ENCODE measurements at regions of chr14 and their contacts with region 1.

Region 1: DNA sequence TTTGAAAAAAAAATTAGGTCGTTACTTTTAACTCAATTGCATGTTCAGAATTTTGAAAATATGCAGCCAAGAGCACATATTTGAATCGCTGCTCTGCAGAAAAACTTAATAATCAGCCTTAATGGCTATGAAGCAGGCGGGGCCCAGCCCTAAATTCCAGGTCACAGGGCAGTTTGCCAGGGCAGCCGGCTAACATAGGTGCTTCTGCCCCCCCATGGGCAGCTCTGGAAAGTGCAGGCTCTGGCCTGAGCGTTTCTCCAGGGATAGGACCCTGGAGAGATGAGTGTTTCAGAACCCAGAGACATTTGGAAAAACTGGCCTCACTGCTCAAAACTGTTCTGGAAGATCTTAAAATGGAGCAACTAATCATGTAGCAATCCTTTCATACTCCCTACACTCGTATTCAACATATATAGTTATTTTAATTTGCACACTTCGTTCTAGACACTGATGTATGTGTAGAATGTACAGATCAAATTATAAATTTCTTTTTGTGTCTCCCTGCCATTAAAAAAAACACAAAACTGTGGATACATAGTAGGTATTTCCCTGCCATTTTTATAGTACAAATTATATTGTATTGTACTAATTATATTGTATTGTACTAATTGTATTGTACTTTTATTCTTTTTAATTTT is 26.0 kb upstream of the PTGR2 start:
- DNase-seq: peak; percentile 68 to 86
- H3K4me3 ChIP-seq: no peak overlapping the region
- H3K27ac ChIP-seq: no peak overlapping the region
- H3K4me1 ChIP-seq: peaks cover 33% of the 10 kb centered on the region
- H3K27me3 ChIP-seq: no peaks in the 10 kb centered on the region
- CTCF ChIP-seq: peak; percentile 85

Region 2: GRCh38 chr14:73753959-73754882 is 71.4 kb before region 1 on chr14:
- CTCF ChIA-PET with region 1: no interaction called
- POLR2A ChIA-PET with region 1: no interaction called
- intact Hi-C with region 1: loop called (anchors 1 kb)
- DNase-seq: no peak
- H3K4me3 ChIP-seq: no peak overlapping the region
- H3K27ac ChIP-seq: peak overlapping the region; percentile 90
- H3K4me1 ChIP-seq: peaks cover 79% of the 10 kb centered on the region
- H3K27me3 ChIP-seq: no peaks in the 10 kb centered on the region
- CTCF ChIP-seq: no peak

Region 3: DNA sequence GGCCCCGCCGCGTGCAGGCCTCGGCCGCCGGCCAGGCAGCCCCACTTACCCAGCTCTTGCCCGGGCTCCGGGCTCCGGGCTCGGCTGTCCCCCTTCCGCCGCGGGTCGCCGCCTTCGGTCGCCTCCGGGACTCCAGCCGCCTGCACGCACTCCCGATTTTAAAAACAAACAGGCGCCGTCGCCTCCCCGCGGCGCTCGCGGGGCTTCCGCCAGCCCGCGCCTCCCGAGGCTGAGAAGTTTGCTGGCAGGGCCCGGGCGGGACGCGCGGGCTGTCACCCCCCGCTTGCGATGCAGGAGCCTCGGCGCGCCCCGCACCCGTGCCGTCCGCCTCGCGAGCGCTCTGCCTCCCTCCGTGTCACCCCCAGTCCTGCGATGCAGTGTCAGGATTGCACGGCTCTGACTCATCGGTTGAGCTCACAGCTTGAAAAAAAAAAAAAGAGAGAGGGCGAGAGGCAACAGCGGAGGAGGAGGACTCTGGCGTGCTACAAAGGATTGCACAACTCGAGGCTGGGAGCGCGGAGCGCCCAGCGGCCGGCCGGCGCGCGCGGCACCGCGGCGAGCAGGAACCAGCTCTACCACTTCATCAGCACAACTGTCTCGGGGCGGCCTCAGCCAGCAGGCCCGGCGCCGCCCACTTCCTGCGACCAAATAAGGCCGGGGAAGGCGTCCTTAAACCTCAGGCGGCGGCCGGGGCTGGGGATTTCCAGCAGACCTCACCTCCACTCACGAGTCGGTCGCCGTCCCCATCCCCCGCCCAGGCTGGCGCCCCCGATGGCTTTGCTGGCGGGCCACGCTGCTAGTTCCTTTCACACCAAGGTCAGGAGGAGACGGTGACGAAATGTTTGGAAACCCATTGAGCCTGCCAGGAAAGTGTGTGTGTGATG is 65.7 kb before region 1 on chr14:
- CTCF ChIA-PET with region 1: no interaction called
- POLR2A ChIA-PET with region 1: no interaction called
- intact Hi-C with region 1: loop called (anchors 1 kb)
- DNase-seq: peak; percentile 96
- H3K4me3 ChIP-seq: peak overlapping the region; percentile 90
- H3K27ac ChIP-seq: peak overlapping the region; percentile 76
- H3K4me1 ChIP-seq: peaks cover 54% of the 10 kb centered on the region
- H3K27me3 ChIP-seq: no peaks in the 10 kb centered on the region
- CTCF ChIP-seq: no peak

Region 4: DNA sequence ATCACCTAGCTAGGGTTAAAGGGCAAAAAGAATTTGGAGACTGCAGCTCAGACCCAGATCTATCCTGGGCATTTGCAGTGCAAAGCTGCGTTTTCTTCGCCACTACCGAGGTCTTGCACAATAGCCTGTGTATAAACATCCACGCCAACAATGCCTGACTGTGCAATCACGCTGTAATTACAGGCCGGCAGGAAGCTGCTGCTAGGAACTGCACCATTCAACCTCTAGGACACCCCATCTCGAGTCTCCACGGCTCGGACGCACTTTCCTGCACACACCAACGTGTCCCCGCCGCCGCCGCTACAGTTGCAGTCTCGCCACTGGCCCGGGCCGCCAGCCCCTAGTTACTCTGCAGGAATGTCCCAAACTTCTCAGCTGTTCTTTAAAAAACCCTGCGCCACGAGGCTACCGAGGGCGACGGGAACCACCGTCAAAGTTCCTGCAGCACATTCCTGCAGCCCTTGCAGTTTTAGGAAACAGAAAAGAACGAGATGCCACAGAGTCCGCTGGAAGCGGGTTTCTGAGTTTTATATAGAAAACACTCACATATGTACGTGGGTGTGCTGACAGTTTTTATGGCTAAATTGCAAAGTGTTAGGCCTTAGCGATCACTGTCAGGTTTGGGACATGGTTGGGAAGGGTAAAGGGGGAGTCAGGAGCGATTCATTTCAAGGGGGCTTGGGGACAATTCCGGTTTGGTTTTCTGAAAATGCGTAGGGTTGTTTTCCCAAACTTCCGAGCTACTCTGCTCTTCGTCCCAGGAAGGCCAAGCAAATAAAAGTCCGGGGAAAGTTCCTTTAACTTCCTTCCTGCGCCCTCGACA is 39.6 kb before region 1 on chr14:
- CTCF ChIA-PET with region 1: interaction called, 3 read pairs
- POLR2A ChIA-PET with region 1: interaction called, 3 read pairs
- intact Hi-C with region 1: loop called (anchors 2 kb)
- DNase-seq: peak; percentile 61 to 85
- H3K4me3 ChIP-seq: peak overlapping the region; percentile 71
- H3K27ac ChIP-seq: peak overlapping the region; percentile 77
- H3K4me1 ChIP-seq: peaks cover 38% of the 10 kb centered on the region
- H3K27me3 ChIP-seq: no peaks in the 10 kb centered on the region
- CTCF ChIP-seq: peak; percentile 43; the same call in 1 of the 2 replicates

Region 5: DNA sequence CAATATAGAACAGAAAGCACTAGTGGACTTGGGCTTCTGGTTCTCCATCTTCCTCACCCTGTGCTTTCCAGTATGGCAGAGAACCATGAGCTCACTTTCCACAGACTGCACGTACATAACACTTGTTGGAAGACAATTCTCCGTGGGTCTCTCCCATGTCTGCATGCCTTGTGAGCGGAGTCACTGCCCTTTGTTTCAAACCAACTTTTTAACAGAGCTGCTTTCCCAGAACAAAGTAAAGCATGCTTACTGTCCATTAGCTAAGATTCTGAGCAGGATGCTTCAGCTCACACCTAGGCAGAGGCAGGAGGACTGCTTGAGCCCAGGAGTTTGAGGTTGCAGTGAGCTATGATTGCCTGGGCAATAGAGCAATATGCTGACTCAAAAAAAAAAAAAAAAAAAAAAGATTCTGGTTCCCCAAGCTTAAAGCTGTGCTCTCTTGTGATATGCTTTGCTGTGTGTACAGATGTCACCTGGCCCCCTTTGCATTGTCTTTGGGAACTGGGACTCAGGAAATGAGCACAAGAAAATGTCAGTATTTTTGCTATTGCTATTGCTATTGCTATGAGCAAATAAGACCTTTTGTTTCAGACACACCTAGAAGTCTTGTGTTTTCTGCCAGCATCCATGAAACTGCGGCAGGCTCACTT is 28.7 kb before region 1 on chr14:
- CTCF ChIA-PET with region 1: no interaction called
- POLR2A ChIA-PET with region 1: no interaction called
- intact Hi-C with region 1: no loop called
- DNase-seq: no peak
- H3K4me3 ChIP-seq: no peak overlapping the region
- H3K27ac ChIP-seq: peak overlapping the region; percentile 88
- H3K4me1 ChIP-seq: peaks cover 50% of the 10 kb centered on the region
- H3K27me3 ChIP-seq: no peaks in the 10 kb centered on the region
- CTCF ChIP-seq: no peak

Region 6: DNA sequence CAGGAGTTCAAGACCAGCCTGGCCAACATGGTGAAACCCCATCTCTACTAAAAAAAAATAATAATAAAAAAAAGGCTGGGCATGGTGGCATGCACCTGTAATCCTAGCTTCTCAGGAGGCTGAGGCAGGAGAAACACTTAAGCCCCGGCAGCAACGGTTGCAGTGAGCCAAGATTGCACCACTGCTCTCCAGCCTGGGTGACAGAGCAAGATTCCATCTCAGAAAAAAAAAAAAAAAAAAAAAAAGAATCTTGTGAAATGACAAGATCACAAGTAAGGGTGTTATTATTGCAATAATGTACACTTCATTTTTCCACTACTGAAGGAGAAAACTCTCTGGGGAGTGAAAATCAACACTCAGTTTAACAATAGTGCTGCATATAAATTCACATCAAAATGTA is 17.2 kb after region 1 on chr14:
- CTCF ChIA-PET with region 1: no interaction called
- POLR2A ChIA-PET with region 1: interaction called, 10 read pairs
- intact Hi-C with region 1: no loop called
- DNase-seq: no peak
- H3K4me3 ChIP-seq: no peak overlapping the region
- H3K27ac ChIP-seq: no peak overlapping the region
- H3K4me1 ChIP-seq: no peaks in the 10 kb centered on the region
- H3K27me3 ChIP-seq: no peaks in the 10 kb centered on the region
- CTCF ChIP-seq: no peak

Region 7: DNA sequence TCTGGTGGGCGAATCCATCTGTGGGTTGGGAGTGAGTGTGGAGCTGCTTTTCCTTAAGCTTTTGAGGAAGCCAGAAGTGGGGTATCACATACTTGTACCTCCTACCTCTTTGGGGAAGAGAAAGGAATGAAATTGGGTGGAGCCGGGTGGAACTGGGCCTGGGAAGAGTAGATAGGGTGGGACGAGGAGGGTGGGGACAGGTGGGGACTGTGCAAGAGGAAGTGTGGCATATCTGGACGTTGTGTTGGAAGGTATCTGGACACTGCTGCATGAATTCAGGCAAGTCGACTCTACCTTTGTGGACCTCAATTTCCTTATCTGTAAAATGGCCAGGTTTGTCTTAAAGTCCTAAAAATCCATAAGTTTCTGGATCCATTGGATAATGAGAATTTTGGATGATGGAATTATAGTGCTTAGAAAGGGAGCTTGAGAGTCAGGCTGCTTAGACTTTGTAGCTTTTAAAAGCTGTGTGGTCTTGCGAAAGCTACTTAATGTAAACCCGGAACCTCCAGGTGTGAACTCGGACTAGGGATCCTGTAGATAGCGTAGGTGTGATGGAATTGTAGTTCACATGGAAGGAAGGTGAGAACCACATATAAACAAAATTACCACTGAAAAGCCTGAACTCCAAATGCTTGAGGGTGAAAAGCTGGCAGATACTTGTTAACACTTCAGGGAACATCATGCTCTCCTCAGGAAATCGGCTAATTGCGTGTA is 524.7 kb after region 1 on chr14:
- CTCF ChIA-PET with region 1: no interaction called
- POLR2A ChIA-PET with region 1: no interaction called
- intact Hi-C with region 1: no loop called
- DNase-seq: no peak
- H3K4me3 ChIP-seq: no peak overlapping the region
- H3K27ac ChIP-seq: no peak overlapping the region
- H3K4me1 ChIP-seq: peaks cover 11% of the 10 kb centered on the region
- H3K27me3 ChIP-seq: peaks cover 4% of the 10 kb centered on the region; the same call in 1 of the 2 replicates
- CTCF ChIP-seq: no peak

Measured in PC-9 (cell line).